HCT116 (cell line): ENCODE measurements at regions of chr1 and their contacts with region 1.

Region 1: GRCh38 chr1:230268366-230269170 is 157.6 kb downstream of the PGBD5 start:
- DNase-seq: peak; percentile 6
- ATAC-seq: peak; percentile 89
- H3K4me3 ChIP-seq: no peak overlapping the region
- H3K27ac ChIP-seq: no peak overlapping the region
- H3K4me1 ChIP-seq: peaks cover 0 to 7% of the 10 kb centered on the region in 2 experiments; a peak in 2 of 4 replicates
- H3K27me3 ChIP-seq: no peaks in the 10 kb centered on the region
- CTCF ChIP-seq: peak; percentile 42 to 51 (median 50); a peak in 4 of 6 replicates
- POLR2A ChIP-seq: no peak
- RAD21 ChIP-seq: peak; percentile 72

Region 2: GRCh38 chr1:229661022-229661877 is 607.3 kb before region 1 on chr1:
- CTCF ChIA-PET with region 1: no interaction called
- POLR2A ChIA-PET with region 1: no interaction called
- RAD21 ChIA-PET with region 1: no interaction called
- intact Hi-C with region 1: loop called (anchors 5 kb)
- DNase-seq: peak; percentile 32
- ATAC-seq: peak; percentile 96
- H3K4me3 ChIP-seq: no peak overlapping the region
- H3K27ac ChIP-seq: no peak overlapping the region; the same call in 1 of the 2 replicates
- H3K4me1 ChIP-seq: no peaks in the 10 kb centered on the region
- H3K27me3 ChIP-seq: no peaks in the 10 kb centered on the region
- CTCF ChIP-seq: peak; percentile 70 to 94 (median 89)
- POLR2A ChIP-seq: no peak
- RAD21 ChIP-seq: peak; percentile 84

Region 3: GRCh38 chr1:230066466-230067404 is 201.8 kb before region 1 on chr1 and contains the start of gene GALNT2:
- CTCF ChIA-PET with region 1: no interaction called
- POLR2A ChIA-PET with region 1: no interaction called
- RAD21 ChIA-PET with region 1: no interaction called
- intact Hi-C with region 1: loop called (anchors 2 kb)
- DNase-seq: peak; percentile 52
- ATAC-seq: peak; percentile 93
- H3K4me3 ChIP-seq: peak within 1 kb of the TSS; percentile 79 to 89
- H3K27ac ChIP-seq: peak within 1 kb of the TSS; percentile 58
- H3K4me1 ChIP-seq: peaks cover 11 to 17% of the 10 kb centered on the region in 2 experiments; a peak in 3 of 4 replicates
- H3K27me3 ChIP-seq: no peaks in the 10 kb centered on the region
- CTCF ChIP-seq: no peak
- POLR2A ChIP-seq: peak; percentile 32
- RAD21 ChIP-seq: no peak
- total RNA-seq, gene GALNT2: 40.8 TPM